ENCODE measurements at regions of chr4 and their contacts with region 1.

Region 1: GRCh38 chr4:159487284-159487747 is 384.4 kb downstream of the RAPGEF2 start:
- DNase-seq: peak; percentile 3
- H3K4me3 ChIP-seq: no peak overlapping the region
- H3K27me3 ChIP-seq: peaks cover 3% of the 10 kb centered on the region; the same call in 1 of the 2 replicates
- CTCF ChIP-seq: peak; percentile 74

Region 2: DNA sequence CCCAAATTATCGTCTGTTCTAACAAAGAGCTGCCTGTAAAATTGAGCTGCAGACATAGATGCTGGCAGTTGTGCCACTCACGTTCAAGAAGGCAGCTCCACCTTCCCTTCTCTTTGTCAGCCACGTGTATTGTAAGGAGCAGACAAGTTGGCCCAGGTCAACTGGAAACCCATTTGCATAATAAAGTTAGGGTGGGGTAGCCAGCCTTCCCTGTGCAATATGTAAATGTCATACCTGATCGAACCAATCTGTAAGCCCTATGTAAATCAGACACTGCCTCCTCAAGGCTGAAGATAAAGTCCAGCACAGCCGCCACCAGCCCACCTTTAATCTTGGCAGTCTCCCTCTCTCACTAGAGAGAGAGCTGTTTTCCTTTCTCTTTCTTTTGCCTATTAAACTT is 1159.8 kb before region 1 on chr4:
- CTCF ChIA-PET with region 1: no interaction called
- POLR2A ChIA-PET with region 1: no interaction called
- DNase-seq: no peak
- H3K4me3 ChIP-seq: no peak overlapping the region
- H3K27me3 ChIP-seq: no peaks in the 10 kb centered on the region
- CTCF ChIP-seq: no peak

Region 3: GRCh38 chr4:159476886-159477285 is 10.4 kb before region 1 on chr4:
- CTCF ChIA-PET with region 1: interaction called, 13 read pairs
- POLR2A ChIA-PET with region 1: no interaction called
- DNase-seq: no peak
- H3K4me3 ChIP-seq: no peak overlapping the region
- H3K27me3 ChIP-seq: no peaks in the 10 kb centered on the region
- CTCF ChIP-seq: no peak

Region 4: GRCh38 chr4:159498446-159499115 is 11.3 kb after region 1 on chr4:
- CTCF ChIA-PET with region 1: interaction called, 28 read pairs
- POLR2A ChIA-PET with region 1: no interaction called
- DNase-seq: no peak
- H3K4me3 ChIP-seq: no peak overlapping the region
- H3K27me3 ChIP-seq: no peaks in the 10 kb centered on the region
- CTCF ChIP-seq: no peak

Measured in BJ (cell line).